BJ (cell line): ENCODE measurements at regions of chr7 and their contacts with region 1.

Region 1: GRCh38 chr7:100456558-100456957 is 7.5 kb downstream of the SPACDR start:
- DNase-seq: no peak
- H3K4me3 ChIP-seq: no peak overlapping the region
- H3K27me3 ChIP-seq: no peaks in the 10 kb centered on the region
- CTCF ChIP-seq: no peak

Region 2: DNA sequence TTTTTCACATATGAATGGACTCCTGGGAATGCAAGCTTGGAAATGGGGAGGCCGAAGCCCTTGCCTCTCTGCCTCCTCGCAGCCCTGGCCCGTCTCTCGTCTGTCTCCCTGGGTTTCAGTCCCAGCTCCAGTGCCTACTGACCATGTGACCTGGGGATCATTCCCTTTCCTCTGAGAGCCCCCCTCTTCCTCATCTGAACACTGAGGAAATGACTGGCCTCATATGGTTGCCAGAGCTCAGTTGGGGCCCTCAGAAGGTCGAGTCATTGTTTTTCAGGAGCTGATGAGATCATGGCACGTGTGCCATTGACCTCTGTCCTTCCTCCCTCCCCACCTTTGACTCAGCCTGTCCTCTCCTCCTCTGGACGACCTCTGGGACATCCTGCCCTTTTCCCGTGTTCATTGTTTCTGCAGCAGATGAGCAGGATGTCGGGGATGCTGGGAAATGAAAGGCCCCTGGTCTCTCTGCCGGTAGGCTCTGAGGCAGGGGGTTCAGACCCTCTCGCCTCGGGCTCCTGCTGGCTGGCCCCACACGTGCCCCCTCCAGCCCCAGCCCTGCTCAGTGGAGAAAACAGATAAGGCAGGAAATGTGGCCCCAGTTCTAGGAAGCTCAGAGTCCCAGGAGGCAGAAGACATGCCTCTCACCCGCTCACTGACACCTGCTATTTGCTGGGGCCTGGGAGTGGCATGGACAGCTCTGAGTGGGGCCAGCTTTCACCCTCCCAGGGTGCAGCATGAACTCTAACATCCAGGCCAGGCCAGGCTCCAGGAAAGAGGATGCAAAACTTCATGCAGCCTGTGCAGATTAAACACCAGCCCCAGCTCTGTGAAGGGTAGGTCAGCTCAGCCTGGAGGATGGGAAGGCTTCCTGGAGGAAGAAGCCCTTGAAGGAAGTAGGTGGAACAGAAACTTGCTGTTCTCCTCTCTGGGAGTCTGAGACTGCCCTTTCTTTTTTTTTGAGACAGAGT is 12.0 kb before region 1 on chr7:
- CTCF ChIA-PET with region 1: interaction called, 4 read pairs
- POLR2A ChIA-PET with region 1: interaction called, 12 read pairs
- DNase-seq: no peak
- H3K4me3 ChIP-seq: no peak overlapping the region
- H3K27me3 ChIP-seq: no peaks in the 10 kb centered on the region
- CTCF ChIP-seq: no peak

Region 3: GRCh38 chr7:100469227-100470044 is 12.9 kb after region 1 on chr7:
- CTCF ChIA-PET with region 1: interaction called, 34 read pairs
- POLR2A ChIA-PET with region 1: no interaction called
- DNase-seq: no peak
- H3K4me3 ChIP-seq: no peak overlapping the region
- H3K27me3 ChIP-seq: no peaks in the 10 kb centered on the region
- CTCF ChIP-seq: peak; percentile 98

Region 4: GRCh38 chr7:100509231-100509630 is 52.7 kb after region 1 on chr7:
- CTCF ChIA-PET with region 1: no interaction called
- POLR2A ChIA-PET with region 1: no interaction called
- DNase-seq: peak; percentile 26
- H3K4me3 ChIP-seq: no peak overlapping the region
- H3K27me3 ChIP-seq: peaks cover 2% of the 10 kb centered on the region; the same call in 1 of the 2 replicates
- CTCF ChIP-seq: no peak